Dorsolateral prefrontal cortex (tissue), 120 donors: ENCODE measurements at regions of chr5 and their contacts with region 1.

Region 1: GRCh38 chr5:81301271-81302015 is at the start of gene ZCCHC9:
- DNase-seq: peak; percentile 88 to 94 (median 93)
- H3K4me3 ChIP-seq: peak within 1 kb of the TSS; percentile 79 to 99 (median 92)
- H3K27ac ChIP-seq: peak within 1 kb of the TSS; percentile 52 to 95 (median 86)
- H3K27me3 ChIP-seq: no peaks in the 10 kb centered on the region
- CTCF ChIP-seq: peak; percentile 18 to 76 (median 59)
- total RNA-seq, gene ZCCHC9: 8.6 to 20.8 (median 14.3) TPM

Region 2: GRCh38 chr5:80967500-80968181 is 333.8 kb before region 1 on chr5:
- intact Hi-C with region 1: no loop called
- DNase-seq: no peak
- H3K4me3 ChIP-seq: no peak overlapping the region
- H3K27ac ChIP-seq: peak overlapping the region in 53 of 59 donors; percentile 5 to 96 (median 57)
- H3K27me3 ChIP-seq: no peaks in the 10 kb centered on the region
- CTCF ChIP-seq: no peak

Region 3: GRCh38 chr5:81239613-81240012 is 61.8 kb before region 1 on chr5:
- intact Hi-C with region 1: loop called in 1 of 2 experiments (anchors 5 kb)
- DNase-seq: peak in 4 of 10 donors; percentile 48 to 67 (median 62)
- H3K4me3 ChIP-seq: no peak overlapping the region
- H3K27ac ChIP-seq: peak overlapping the region in 22 of 59 donors; percentile 7 to 61 (median 36)
- H3K27me3 ChIP-seq: no peaks in the 10 kb centered on the region
- CTCF ChIP-seq: peak in 19 of 56 donors; percentile 6 to 50 (median 21)

Region 4: DNA sequence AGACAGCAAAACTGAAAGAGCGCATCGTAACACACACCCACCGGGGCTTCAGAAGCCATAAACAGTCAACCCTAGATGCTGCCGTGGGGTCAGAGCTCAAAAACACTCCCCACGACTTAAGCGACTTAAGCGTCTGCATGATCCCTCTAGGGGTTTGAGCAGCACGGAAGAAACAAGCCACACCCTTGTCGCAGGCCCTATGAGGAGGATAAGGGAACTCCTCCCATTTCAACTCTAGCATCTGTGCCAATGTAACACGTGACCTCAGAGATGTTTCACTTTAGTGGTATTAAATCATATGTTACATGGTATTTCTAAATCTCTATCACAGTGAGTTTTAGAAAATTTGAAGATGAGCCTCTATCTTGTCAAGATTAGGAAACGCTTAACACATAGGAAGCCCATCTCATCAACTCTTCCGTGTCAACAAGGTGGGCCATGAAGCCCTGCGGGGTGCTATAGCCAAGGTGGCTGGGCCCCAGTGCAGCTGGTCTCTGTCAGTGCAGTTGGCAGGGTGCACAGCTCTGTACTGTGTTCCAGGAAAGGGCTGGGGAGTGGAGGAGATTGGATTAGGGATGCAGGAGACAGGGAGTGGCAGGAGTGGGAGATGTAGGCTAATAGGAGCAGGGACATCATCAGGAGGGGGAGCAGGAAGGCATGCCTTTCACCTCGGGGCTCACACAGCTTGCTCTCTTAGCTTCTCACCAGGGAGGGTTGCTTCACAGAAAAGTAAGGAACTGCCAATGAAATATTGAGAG is 33.0 kb after region 1 on chr5:
- intact Hi-C with region 1: no loop called
- DNase-seq: no peak
- H3K4me3 ChIP-seq: no peak overlapping the region
- H3K27ac ChIP-seq: no peak overlapping the region
- H3K27me3 ChIP-seq: no peaks in the 10 kb centered on the region
- CTCF ChIP-seq: no peak